ENCODE measurements at regions of chrX and their contacts with region 1.

Region 1: DNA sequence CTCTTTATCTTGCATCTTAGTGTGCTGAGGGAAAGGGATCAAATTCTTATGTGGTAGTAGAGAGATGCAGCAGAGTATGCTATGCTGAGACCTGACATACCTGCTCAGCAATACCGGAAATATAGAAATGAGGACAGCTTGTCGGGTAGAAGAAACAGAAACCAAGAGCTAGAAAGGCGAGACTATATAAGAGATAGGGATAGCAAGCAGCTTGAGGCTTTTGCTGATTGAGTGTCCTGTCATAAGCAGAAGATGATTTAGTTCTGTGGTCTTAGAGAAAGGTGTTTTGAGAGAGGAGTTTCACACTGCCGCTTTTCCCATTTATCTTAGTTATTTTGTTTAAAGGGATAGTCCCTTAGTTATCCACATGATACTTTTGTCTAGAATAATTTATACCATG is 31.7 kb downstream of the USP9X start:
- DNase-seq: no peak
- ATAC-seq: peak in 1 of 4 donors; percentile 44
- H3K4me3 ChIP-seq: no peak overlapping the region
- H3K27ac ChIP-seq: no peak overlapping the region
- H3K4me1 ChIP-seq: peaks cover 0 to 79% (median 19%) of the 10 kb centered on the region in 12 donors
- H3K27me3 ChIP-seq: no peaks in the 10 kb centered on the region
- CTCF ChIP-seq: no peak
- POLR2A ChIP-seq: no peak

Region 2: DNA sequence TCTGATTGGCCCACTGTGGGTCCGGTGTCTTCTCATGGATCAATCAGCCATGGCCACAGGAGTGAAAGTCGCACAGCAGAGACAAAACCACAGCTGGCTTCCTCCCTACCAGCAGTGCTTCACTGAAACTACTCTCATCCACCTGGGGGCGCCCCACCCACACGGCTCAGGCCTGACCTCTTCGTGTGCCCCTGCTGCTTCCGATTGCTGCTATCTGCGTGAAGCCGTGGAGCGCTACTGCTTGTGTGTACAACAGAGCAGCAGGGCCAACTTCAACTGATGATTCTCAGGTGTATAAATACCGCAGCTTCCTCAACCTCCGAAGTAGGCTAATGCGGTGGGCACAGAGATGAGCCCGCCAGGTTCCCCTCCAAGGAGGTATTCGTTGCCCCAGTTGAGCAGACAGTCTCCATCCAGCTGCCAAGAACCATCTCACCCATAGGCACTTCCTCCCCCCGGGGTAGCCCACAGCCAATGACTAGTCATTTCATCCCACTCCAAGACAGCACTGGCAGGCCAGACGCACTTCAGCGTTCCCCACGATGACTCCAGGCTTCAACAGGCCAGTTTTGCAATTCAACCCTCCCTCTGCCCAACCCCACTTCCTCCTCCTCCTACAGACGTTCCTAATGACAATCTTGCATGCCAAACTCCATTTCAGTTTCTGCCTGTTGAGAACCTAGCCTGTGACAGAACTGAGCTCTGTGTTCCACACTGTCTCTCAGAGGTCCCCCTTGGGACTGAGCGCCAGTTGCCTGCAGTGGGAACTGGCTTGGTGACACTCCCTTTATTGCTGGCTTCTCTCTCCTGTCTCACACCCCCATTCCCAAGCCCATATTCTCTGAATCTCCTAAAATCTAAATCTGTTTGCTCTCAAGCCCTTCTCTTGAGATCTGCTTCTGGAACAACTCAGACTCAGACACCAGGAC is 577.5 kb before region 1 on chrX:
- intact Hi-C with region 1: loop called in 1 of 10 experiments (anchors 10 kb)
- DNase-seq: peak in 4 of 5 donors; percentile 20 to 65 (median 53)
- ATAC-seq: peak; percentile 37 to 88 (median 76)
- H3K4me3 ChIP-seq: no peak overlapping the region
- H3K27ac ChIP-seq: peak overlapping the region in 4 of 12 donors; percentile 19 to 55 (median 26)
- H3K4me1 ChIP-seq: peaks cover 0 to 11% (median 0%) of the 10 kb centered on the region in 12 donors
- H3K27me3 ChIP-seq: peaks cover 0 to 65% (median 0%) of the 10 kb centered on the region in 9 donors
- CTCF ChIP-seq: peak in 1 of 12 donors; percentile 18
- POLR2A ChIP-seq: no peak

Region 3: GRCh38 chrX:40809210-40809609 is 307.7 kb before region 1 on chrX:
- intact Hi-C with region 1: loop called in 2 of 10 experiments (anchors 10 kb)
- DNase-seq: no peak
- ATAC-seq: no peak
- H3K4me3 ChIP-seq: no peak overlapping the region
- H3K27ac ChIP-seq: no peak overlapping the region
- H3K4me1 ChIP-seq: no peaks in the 10 kb centered on the region
- H3K27me3 ChIP-seq: peaks cover 0 to 22% (median 0%) of the 10 kb centered on the region in 9 donors
- CTCF ChIP-seq: no peak
- POLR2A ChIP-seq: no peak

Region 4: DNA sequence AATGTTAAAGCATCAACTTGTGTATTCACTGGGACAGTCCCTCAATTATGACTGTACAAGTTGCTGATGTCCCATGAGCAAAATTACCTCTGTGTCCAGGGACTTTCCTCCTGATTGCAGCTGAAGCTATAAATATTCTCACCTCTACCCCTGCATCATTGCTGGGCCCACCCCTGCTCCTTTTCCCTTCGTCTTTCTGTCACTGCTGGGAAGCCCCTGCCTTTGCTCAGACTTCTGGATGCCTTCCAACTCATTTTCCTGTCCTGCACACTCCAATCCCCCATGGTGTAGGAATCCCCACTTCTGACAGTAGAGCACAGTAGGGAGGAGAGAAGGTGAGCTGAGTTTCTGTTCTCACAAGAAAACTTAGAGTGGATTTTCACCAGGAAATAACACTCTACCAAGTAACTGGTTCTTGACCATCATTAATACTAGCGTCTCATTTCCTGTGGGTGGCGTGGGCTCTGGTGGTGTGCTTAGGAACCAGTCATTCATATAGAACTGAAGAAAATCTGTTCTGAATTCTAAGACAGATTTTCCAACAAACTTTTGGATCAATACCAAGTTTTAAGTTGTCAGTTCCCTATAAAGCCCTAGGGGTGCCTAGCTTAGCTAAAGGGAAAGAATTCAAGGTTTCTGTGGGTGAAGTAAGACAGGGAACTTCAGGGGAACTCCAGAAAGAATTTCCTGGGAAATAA is 245.4 kb before region 1 on chrX:
- intact Hi-C with region 1: loop called in 9 of 10 experiments (anchors 2 to 10 kb)
- DNase-seq: no peak
- ATAC-seq: peak in 1 of 4 donors; percentile 49
- H3K4me3 ChIP-seq: no peak overlapping the region
- H3K27ac ChIP-seq: no peak overlapping the region
- H3K4me1 ChIP-seq: peaks cover 0 to 11% (median 7%) of the 10 kb centered on the region in 12 donors
- H3K27me3 ChIP-seq: peaks cover 0 to 26% (median 0%) of the 10 kb centered on the region in 9 donors
- CTCF ChIP-seq: no peak
- POLR2A ChIP-seq: no peak

Region 5: GRCh38 chrX:40877887-40878286 is 239.1 kb before region 1 on chrX:
- intact Hi-C with region 1: loop called (anchors 2 to 10 kb)
- DNase-seq: no peak
- ATAC-seq: no peak
- H3K4me3 ChIP-seq: no peak overlapping the region
- H3K27ac ChIP-seq: no peak overlapping the region
- H3K4me1 ChIP-seq: peaks cover 0 to 5% (median 0%) of the 10 kb centered on the region in 12 donors
- H3K27me3 ChIP-seq: peaks cover 0 to 29% (median 0%) of the 10 kb centered on the region in 9 donors
- CTCF ChIP-seq: peak; percentile 20 to 58 (median 41)
- POLR2A ChIP-seq: no peak

Region 6: DNA sequence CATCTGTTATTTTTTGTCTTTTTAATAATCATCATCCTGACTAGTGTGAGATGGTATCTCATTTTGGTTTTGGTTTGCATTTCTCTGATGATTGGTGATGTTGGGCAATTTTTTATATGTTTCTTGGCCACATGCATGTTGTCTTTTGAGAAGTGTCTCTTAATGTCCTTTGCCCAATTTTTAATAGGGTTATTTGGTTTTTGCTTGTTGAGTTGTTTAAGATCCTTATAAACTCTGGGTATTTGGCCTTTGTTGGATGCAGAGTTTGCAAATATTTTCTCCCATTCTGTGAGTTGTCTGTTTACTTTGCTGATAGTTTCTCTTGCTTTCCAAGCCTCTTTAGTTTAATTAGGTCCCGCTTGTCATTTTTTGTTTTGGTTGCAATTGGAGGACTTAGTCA is 229.5 kb before region 1 on chrX:
- intact Hi-C with region 1: loop called in 1 of 10 experiments (anchors 10 kb)
- DNase-seq: no peak
- ATAC-seq: no peak
- H3K4me3 ChIP-seq: no peak overlapping the region
- H3K27ac ChIP-seq: no peak overlapping the region
- H3K4me1 ChIP-seq: no peaks in the 10 kb centered on the region
- H3K27me3 ChIP-seq: peaks cover 0 to 14% (median 0%) of the 10 kb centered on the region in 9 donors
- CTCF ChIP-seq: no peak
- POLR2A ChIP-seq: no peak

Region 7: DNA sequence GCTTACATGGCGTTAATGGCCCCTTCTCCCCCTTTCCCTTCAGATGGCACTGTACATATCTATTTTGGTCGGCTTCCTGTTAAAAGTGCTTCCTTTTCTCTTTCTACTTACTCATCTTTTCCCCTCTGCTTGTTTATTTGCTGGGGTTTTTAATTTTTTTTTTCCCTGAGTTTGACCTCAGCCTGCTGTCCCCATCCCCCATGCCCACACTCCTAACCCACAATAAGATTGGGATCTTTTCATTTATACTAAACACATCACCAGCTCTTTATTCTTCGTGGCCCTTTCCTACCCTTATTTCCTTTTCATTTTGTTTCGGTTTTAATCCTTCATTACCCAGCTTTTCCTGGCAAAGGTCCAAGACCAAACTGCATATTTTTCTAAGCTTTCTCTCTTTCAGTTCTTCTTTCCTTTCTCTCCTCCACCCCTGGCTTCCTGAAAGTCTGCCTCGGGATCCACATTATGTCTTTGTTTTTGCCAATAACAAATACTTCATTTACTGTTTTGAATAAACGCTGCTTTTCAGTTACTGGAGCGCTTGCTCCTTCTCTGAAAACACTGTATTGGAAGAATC is 183.7 kb before region 1 on chrX:
- intact Hi-C with region 1: loop called in 2 of 10 experiments (anchors 10 kb)
- DNase-seq: peak in 2 of 5 donors; percentile 21 to 30
- ATAC-seq: peak in 2 of 4 donors; percentile 29 to 60
- H3K4me3 ChIP-seq: peak overlapping the region in 7 of 12 donors; percentile 12 to 43 (median 26)
- H3K27ac ChIP-seq: peak overlapping the region in 10 of 12 donors; percentile 6 to 91 (median 59)
- H3K4me1 ChIP-seq: peaks cover 0 to 28% (median 0%) of the 10 kb centered on the region in 12 donors
- H3K27me3 ChIP-seq: peaks cover 0 to 3% (median 0%) of the 10 kb centered on the region in 9 donors
- CTCF ChIP-seq: no peak
- POLR2A ChIP-seq: no peak